OCI-LY7 (cell line): ENCODE measurements at regions of chr18 and their contacts with region 1.

Region 1: DNA sequence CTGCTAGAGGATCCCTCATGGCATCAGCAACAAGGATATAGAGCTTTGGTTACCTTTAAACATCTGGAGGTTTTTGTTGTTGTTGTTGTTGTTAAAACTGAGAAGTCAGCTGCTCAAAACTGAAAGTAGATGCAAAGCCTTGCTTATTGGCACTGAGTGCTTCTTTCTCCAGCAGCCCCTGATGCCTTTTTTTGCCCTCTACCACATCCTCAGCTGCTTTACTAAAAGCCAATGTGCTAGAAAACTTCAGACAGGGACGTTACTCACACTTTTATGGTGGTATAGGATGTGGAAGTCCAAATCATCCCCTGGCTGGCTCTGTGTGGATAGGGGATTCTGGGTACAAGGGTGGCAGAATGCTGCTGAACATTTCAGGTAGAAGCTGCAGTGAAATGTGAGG is 78.3 kb upstream of the CHST9 start:
- DNase-seq: no peak
- H3K4me3 ChIP-seq: no peak overlapping the region
- H3K27ac ChIP-seq: no peak overlapping the region
- H3K4me1 ChIP-seq: no peaks in the 10 kb centered on the region
- CTCF ChIP-seq: no peak

Region 2: DNA sequence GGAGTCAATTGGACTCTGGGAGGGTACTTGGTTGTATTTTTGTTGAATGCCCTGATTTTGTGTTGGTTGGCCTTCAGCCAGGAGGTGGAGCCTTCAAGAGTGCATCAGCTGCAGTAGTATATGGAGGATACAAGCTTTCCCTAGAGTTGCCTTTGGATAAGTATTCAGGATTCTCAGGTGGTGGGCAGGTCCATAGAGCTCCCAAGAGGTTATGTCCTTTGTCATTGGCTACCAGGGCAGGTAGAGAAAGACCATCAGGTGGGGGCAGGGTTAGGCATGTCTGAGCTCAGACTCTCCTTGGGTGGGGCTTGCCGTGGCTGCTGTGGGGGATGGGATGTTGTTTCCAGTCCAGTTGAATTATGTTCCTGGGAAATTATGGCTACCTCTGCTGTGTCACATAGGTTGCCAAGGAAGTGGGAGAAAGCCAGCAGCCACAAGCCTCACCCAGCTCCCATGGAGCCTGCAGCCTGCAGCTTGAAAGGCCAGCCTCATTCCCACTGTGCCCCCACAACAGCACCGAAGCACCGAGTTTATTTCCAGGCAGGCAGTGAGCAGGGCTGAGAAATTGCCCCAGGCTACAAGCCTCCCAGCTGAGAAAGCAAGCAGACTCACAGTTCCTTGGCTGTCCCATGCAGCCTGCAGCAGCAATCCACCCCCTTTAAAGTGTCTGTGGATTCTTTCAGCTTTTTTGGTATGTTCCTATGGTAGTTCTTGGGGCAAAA is 39.6 kb before region 1 on chr18:
- CTCF ChIA-PET with region 1: no interaction called
- POLR2A ChIA-PET with region 1: no interaction called
- intact Hi-C with region 1: no loop called
- DNase-seq: no peak
- H3K4me3 ChIP-seq: no peak overlapping the region
- H3K27ac ChIP-seq: no peak overlapping the region
- H3K4me1 ChIP-seq: no peaks in the 10 kb centered on the region
- CTCF ChIP-seq: no peak

Region 3: DNA sequence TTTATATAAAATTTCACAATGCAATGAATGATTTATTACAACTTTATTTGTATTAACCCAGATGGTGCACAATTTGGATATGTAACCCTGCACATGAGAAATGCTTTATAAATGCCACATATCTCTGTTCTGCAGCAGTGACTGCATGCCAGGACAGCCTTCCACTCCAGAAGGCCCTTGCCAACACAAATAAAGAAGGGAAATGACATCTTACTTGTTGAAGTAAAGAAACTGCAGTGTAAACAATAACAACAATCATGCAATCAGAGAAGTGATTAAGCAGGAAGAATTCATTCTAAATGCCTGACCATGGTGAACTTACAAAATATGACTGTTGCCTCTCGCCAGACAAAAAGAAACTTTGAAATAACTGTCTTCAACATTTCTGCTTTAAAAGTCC is 51.6 kb after region 1 on chr18:
- CTCF ChIA-PET with region 1: no interaction called
- POLR2A ChIA-PET with region 1: interaction called, 3 read pairs
- intact Hi-C with region 1: loop called (anchors 5 kb)
- DNase-seq: no peak
- H3K4me3 ChIP-seq: no peak overlapping the region
- H3K27ac ChIP-seq: no peak overlapping the region
- H3K4me1 ChIP-seq: no peaks in the 10 kb centered on the region
- CTCF ChIP-seq: no peak